ENCODE measurements at regions of chr5 and their contacts with region 1.

Region 1: DNA sequence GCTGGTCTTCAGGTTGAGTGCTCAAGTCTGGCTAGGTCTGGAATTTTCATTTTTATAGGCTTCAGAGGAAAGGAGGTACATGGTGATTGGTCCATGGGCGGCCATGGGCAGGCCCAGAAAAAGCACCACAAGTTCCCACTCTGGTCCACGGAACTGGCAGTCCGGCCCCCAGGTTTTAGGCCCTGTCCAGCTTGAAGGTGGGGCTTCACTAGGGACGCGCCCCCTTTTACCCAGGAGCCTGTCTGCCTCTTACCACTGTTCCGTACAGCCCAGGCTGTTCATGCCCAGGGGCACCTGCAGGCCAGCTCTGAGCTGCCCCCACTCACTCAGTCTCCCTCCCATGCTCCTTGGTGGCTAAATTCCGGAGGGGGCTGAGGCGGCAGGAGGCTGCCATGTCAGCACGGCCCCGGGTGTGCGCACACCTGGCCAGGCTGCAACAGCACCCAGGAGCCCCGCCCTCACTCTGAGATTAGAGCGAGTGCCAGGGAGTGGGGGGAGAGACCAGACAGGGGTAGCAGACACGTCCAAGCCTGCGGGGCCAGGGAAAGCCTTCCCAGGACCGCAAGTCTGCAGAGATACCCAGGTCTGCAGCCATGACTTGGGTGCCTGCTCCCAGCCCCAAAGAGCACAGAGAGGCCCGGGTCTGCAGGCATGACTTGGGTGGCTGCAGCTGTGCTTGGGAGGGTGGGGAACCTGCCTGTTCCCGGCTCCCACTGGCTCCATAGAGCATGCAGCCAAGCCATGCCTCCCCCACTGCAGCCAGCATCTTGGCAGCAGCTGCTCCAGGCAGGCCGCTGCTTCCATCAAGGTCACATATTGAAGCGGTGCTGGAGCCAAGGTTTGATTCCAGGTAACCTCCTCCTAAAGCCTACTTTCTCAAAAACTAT is 390.2 kb upstream of the SGCD start:
- DNase-seq: peak in 1 of 5 donors; percentile 64
- H3K4me3 ChIP-seq: no peak overlapping the region
- H3K27ac ChIP-seq: no peak overlapping the region
- H3K4me1 ChIP-seq: no peaks in the 10 kb centered on the region
- H3K27me3 ChIP-seq: no peaks in the 10 kb centered on the region
- CTCF ChIP-seq: no peak

Region 2: GRCh38 chr5:156051972-156052371 is 115.2 kb after region 1 on chr5:
- intact Hi-C with region 1: no loop called
- DNase-seq: no peak
- H3K4me3 ChIP-seq: no peak overlapping the region
- H3K27ac ChIP-seq: no peak overlapping the region
- H3K4me1 ChIP-seq: no peaks in the 10 kb centered on the region
- H3K27me3 ChIP-seq: no peaks in the 10 kb centered on the region
- CTCF ChIP-seq: no peak

Region 3: DNA sequence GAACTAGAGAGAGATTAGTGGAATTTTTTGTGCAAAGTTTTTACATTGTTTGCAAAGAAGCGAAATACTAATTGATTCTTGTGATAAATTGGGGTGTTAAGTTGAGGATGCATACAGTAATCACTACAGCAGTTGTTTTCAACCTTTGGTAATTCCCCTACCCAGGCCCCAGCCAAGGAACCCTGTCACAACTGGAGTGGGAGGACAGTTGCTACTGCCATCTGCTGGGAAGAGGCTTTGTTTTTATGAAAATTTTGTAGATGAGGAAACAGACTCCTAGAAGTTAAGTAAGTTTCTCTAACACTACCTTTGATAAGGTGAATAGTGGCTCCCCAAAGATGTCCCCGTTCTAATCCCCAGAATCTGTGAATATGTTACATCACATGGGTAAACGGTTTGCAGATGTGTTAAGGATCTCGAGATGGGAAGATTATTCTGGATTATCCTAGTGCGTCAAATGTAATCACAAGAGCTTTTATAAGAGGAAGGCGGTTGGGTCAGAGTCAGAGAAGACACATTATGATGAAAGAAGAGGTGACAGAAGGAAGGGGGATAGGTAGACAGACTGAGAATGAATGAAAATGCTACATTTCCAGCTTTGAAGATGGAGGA is 879.3 kb after region 1 on chr5:
- intact Hi-C with region 1: loop called (anchors 10 kb)
- DNase-seq: peak in 2 of 5 donors; percentile 25 to 40
- H3K4me3 ChIP-seq: no peak overlapping the region
- H3K27ac ChIP-seq: no peak overlapping the region
- H3K4me1 ChIP-seq: no peaks in the 10 kb centered on the region
- H3K27me3 ChIP-seq: no peaks in the 10 kb centered on the region
- CTCF ChIP-seq: peak; percentile 25

Measured in kidney (tissue), 22 donors.